Panc1 (cell line): ENCODE measurements at regions of chr11 and their contacts with region 1.

Region 1: DNA sequence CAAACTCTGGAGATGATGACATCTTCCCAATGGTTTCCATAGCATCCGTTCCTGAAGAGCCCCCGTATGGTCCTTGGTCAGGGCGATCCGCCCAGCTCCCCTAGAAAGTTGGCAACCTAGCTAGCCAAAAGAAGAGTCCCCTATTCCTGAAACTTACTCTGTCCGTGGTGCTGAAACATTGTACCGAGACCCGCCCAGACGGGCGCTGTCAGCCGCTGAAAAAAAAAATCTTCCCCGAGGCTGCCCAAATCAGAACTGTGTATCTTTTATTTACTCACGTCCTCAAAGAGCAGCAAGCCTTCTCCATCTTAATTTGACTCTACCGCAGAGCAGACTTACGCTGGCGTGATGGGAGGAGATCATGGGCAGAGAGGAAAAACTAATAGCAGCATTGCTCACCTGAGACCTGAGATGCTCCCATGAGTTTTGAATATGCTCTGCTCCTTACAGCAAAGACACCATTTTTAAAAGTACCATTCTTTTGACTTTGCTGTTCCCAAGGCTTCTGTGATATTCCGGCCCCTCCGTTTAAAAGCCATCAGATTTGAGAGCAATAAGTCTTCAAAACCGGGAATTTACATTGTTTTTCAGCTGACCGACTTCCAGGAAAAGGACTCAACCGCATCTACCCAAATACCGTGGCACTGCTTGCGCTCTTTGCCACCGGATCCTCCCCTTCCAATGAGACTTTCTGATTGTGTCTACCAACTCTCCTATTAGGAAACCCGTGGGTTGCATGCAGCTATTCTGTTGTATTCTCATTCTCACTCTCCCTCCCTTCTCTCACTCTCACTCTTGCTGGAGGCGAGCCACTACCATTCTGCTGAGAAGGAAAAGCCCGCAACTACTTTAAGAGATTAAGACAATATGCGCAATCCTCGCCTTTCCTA is at the start of gene SLC17A6:
- DNase-seq: no peak
- ATAC-seq: no peak
- H3K4me3 ChIP-seq: no peak within 1 kb of the TSS
- H3K27ac ChIP-seq: no peak within 1 kb of the TSS
- H3K4me1 ChIP-seq: no peaks in the 10 kb centered on the region
- H3K27me3 ChIP-seq: no peaks in the 10 kb centered on the region
- CTCF ChIP-seq: no peak
- total RNA-seq, gene SLC17A6: not detected

Region 2: DNA sequence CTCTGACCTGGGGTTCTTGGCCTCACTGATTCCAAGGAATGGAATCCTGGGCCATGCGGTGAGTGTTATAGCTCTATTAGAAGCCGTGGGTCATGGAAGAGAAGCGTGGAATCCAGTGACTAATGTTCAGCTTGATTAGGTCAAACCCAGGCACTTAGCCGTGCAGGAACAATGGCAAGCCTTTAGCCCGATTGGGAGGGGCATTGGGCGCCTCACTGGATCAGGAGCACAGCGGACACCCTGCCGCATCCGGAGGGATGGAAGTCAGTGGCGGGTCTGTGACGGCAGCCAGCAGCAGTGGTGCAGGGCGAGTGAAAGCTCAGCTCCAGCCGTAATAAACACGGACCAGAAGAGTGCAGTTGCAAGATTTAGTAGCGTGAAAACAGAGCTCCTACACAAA is 20.2 kb before region 1 on chr11:
- CTCF ChIA-PET with region 1: no interaction called
- POLR2A ChIA-PET with region 1: no interaction called
- in situ Hi-C with region 1: no loop called
- intact Hi-C with region 1: no loop called
- DNase-seq: no peak
- ATAC-seq: no peak
- H3K4me3 ChIP-seq: no peak overlapping the region
- H3K27ac ChIP-seq: no peak overlapping the region
- H3K4me1 ChIP-seq: no peaks in the 10 kb centered on the region
- H3K27me3 ChIP-seq: no peaks in the 10 kb centered on the region
- CTCF ChIP-seq: no peak

Region 3: GRCh38 chr11:22371160-22371559 is 33.3 kb after region 1 on chr11:
- CTCF ChIA-PET with region 1: no interaction called
- POLR2A ChIA-PET with region 1: no interaction called
- in situ Hi-C with region 1: no loop called
- intact Hi-C with region 1: no loop called
- DNase-seq: no peak
- ATAC-seq: no peak
- H3K4me3 ChIP-seq: no peak overlapping the region
- H3K27ac ChIP-seq: no peak overlapping the region
- H3K4me1 ChIP-seq: no peaks in the 10 kb centered on the region
- H3K27me3 ChIP-seq: no peaks in the 10 kb centered on the region
- CTCF ChIP-seq: no peak

Region 4: DNA sequence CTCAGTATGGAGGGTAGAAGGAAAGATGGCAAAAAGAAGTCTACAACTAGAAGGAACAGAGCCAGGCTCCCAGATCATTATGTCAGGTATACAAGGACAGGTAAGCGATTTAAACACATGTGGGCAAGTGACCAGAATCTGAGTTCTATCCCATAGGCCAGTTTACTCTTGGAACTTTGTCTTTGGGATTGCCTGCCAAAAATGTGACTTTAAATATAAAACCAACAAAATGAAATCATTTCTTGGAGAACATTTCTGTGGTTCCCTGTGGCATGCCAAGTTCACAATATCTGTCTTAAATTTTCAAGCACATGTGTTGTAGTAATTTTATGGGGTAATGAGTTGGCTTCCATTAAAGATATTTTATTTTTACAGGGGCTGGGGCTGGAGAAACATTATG is 141.4 kb after region 1 on chr11:
- CTCF ChIA-PET with region 1: no interaction called
- POLR2A ChIA-PET with region 1: no interaction called
- in situ Hi-C with region 1: no loop called
- intact Hi-C with region 1: no loop called
- DNase-seq: no peak
- ATAC-seq: no peak
- H3K4me3 ChIP-seq: no peak overlapping the region
- H3K27ac ChIP-seq: no peak overlapping the region
- H3K4me1 ChIP-seq: no peaks in the 10 kb centered on the region
- H3K27me3 ChIP-seq: no peaks in the 10 kb centered on the region
- CTCF ChIP-seq: no peak

Region 5: DNA sequence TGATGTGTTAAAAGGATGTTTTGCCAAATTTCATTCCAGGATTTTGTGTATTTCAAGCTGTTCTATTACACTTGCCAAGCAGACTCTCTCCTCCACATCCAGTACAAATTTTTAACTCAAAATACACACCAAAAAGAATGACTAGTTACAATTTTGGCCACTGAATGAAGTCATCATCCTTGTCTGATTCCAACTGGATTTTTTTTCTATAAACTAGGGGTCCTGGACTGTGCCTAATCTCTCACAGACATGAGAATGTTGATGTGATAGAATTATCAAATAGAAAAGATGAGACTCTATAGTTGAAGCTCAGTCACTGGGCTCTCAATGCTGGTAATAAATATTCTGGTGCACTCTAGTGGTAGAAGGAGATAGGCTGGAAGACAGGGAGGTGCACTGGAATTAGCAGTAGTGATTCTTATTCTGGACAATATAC is 202.0 kb after region 1 on chr11:
- CTCF ChIA-PET with region 1: no interaction called
- POLR2A ChIA-PET with region 1: no interaction called
- in situ Hi-C with region 1: no loop called
- intact Hi-C with region 1: loop called (anchors 2 kb)
- DNase-seq: no peak
- ATAC-seq: 0 out of 2 replicates have a peak, but pooled peaks have one; percentile 69
- H3K4me3 ChIP-seq: no peak overlapping the region
- H3K27ac ChIP-seq: no peak overlapping the region
- H3K4me1 ChIP-seq: no peaks in the 10 kb centered on the region
- H3K27me3 ChIP-seq: no peaks in the 10 kb centered on the region
- CTCF ChIP-seq: peak; percentile 50; the same call in 1 of the 2 replicates

Region 6: GRCh38 chr11:22787551-22788162 is 449.8 kb after region 1 on chr11:
- CTCF ChIA-PET with region 1: interaction called, 4 read pairs
- POLR2A ChIA-PET with region 1: no interaction called
- in situ Hi-C with region 1: no loop called
- intact Hi-C with region 1: loop called (anchors 1 kb)
- DNase-seq: no peak
- ATAC-seq: peak; percentile 65; the same call in 1 of the 2 replicates
- H3K4me3 ChIP-seq: no peak overlapping the region
- H3K27ac ChIP-seq: no peak overlapping the region
- H3K4me1 ChIP-seq: no peaks in the 10 kb centered on the region
- H3K27me3 ChIP-seq: no peaks in the 10 kb centered on the region; the same call in 1 of the 2 replicates
- CTCF ChIP-seq: peak; percentile 74; the same call in 1 of the 2 replicates